PC-3 (cell line): ENCODE measurements at regions of chr3 and their contacts with region 1.

Region 1: GRCh38 chr3:27712136-27713077 is 9.7 kb downstream of the EOMES start:
- DNase-seq: peak; percentile 84
- ATAC-seq: peak; percentile 82
- H3K4me3 ChIP-seq: peak overlapping the region; percentile 78
- H3K27ac ChIP-seq: no peak overlapping the region
- H3K4me1 ChIP-seq: peaks cover 19% of the 10 kb centered on the region
- H3K27me3 ChIP-seq: peaks cover 12% of the 10 kb centered on the region; the same call in 1 of the 2 replicates
- CTCF ChIP-seq: peak; percentile 86

Region 2: DNA sequence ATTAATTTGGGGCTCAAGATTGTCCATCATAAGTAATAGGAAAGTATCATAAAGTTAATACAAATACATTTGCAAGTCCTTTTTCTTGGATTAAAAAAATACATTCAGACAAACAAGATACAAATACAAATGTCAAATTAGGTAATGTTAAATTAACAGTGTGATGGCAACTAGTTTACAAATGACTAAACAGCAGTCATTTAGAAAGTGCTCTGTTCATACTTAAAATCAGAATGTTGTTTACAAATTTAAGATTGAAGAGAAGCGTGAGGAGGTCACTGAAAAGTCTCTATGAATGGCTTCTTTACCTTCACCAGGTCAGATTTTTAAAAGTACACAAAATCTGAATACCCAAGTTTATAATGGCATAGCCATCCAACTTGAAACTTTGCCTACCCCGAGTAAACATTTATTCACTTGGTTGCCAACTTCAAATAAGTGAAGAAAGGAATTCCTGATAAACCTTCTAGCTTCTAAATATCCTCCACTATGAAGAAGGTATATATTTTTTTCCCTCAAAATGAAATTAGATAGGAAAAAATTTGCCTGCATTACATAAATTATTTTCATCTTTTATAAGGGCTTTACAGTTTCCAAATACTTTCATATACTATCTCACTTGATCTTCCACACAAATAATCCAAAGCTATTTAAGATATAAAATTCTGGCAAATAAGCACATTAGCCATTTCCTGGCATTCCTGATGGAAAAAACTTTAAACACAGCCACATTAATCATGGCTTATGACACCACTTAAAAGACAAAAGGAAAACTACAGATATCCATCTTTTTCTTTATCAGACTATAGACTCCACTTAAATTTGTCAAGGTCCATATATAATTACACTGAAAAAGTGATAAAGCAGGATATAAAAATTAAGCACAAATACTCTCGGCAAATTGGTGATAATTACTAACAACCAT is 331.7 kb before region 1 on chr3:
- CTCF ChIA-PET with region 1: interaction called, 16 read pairs
- POLR2A ChIA-PET with region 1: no interaction called
- intact Hi-C with region 1: no loop called
- DNase-seq: no peak
- ATAC-seq: no peak
- H3K4me3 ChIP-seq: no peak overlapping the region
- H3K27ac ChIP-seq: no peak overlapping the region
- H3K4me1 ChIP-seq: no peaks in the 10 kb centered on the region
- H3K27me3 ChIP-seq: no peaks in the 10 kb centered on the region
- CTCF ChIP-seq: no peak

Region 3: DNA sequence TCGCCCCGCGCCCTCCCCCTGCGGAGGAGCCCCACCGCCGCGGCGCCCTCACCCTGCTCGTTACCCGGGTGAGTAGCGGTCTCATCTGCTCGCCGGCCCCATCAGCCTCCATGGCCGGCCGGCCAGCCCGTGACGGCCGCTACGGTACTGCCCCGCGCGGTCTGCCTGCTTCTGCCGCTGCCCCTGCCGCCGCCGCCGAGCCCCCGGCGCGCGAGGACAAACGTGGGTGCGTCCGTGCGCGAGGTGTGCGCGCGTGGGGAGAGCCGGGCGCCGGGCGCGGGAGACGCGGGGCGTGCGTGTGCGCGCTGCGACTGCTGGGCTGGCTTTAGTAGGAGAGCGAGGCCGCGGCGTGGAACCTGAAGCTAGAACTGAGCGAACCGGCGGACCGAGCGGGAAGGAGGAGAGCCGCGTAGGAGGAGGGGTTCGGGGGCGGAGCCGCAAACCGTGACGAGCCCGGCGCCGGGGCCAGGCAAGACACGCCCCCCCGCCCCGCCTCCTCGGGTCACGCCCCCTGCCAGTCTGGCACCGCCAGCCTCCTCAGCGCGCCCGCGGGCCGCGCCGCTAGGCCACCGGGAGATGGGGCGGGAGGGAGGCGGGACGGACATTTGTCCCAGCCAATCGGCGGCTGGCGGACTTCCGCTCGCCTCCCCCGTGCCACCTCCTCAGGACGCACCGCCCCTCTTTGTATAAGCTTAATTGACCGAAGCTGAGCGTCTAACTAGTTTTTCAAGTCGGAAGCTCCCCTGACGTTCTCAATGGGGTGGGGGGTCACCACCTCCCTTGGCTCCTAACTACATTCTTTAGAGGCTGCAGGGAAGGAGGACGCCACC is 228.2 kb before region 1 on chr3 and contains the start of gene SLC4A7:
- CTCF ChIA-PET with region 1: no interaction called
- POLR2A ChIA-PET with region 1: no interaction called
- intact Hi-C with region 1: no loop called
- DNase-seq: peak; percentile 97
- ATAC-seq: peak; percentile 85
- H3K4me3 ChIP-seq: peak within 1 kb of the TSS; percentile 88
- H3K27ac ChIP-seq: peak within 1 kb of the TSS; percentile 59
- H3K4me1 ChIP-seq: peaks cover 33% of the 10 kb centered on the region
- H3K27me3 ChIP-seq: no peaks in the 10 kb centered on the region
- CTCF ChIP-seq: no peak
- total RNA-seq, gene SLC4A7: 56.0 and 59.7 TPM in 2 replicates

Region 4: DNA sequence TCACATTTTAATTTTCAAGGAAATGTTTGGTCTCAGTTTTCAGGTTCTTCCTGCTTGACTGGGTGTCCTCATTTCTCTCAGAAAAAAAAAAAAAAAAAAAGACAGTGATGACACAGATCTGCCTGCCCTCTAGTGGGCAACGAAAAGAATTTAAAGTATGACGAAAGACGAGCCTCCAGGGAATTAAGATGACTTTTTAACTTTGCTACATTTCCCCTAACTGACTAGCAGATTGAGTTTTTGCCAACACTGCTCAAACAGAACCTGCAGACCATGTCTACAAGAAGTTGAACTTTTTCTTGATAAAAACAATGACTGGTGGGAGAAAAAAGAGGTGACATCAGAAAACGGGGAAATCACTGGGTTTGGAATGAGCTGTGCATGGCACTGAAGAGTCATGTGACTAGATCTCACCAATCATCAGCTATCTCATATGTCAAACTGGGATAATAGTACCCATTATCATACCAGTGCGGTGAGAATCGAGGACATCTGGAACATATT is 31.1 kb before region 1 on chr3:
- CTCF ChIA-PET with region 1: interaction called, 15 read pairs
- POLR2A ChIA-PET with region 1: no interaction called
- intact Hi-C with region 1: no loop called
- DNase-seq: peak; percentile 82
- ATAC-seq: peak; percentile 54
- H3K4me3 ChIP-seq: peak overlapping the region; percentile 58
- H3K27ac ChIP-seq: peak overlapping the region; percentile 21
- H3K4me1 ChIP-seq: peaks cover 34% of the 10 kb centered on the region
- H3K27me3 ChIP-seq: no peaks in the 10 kb centered on the region
- CTCF ChIP-seq: peak; percentile 91

Region 5: GRCh38 chr3:27740854-27741253 is 28.4 kb after region 1 on chr3:
- CTCF ChIA-PET with region 1: no interaction called
- POLR2A ChIA-PET with region 1: no interaction called
- intact Hi-C with region 1: no loop called
- DNase-seq: no peak
- ATAC-seq: no peak
- H3K4me3 ChIP-seq: no peak overlapping the region
- H3K27ac ChIP-seq: no peak overlapping the region
- H3K4me1 ChIP-seq: no peaks in the 10 kb centered on the region
- H3K27me3 ChIP-seq: no peaks in the 10 kb centered on the region
- CTCF ChIP-seq: no peak

Region 6: GRCh38 chr3:27779176-27779575 is 66.8 kb after region 1 on chr3:
- CTCF ChIA-PET with region 1: no interaction called
- POLR2A ChIA-PET with region 1: no interaction called
- intact Hi-C with region 1: no loop called
- DNase-seq: no peak
- ATAC-seq: no peak
- H3K4me3 ChIP-seq: no peak overlapping the region
- H3K27ac ChIP-seq: no peak overlapping the region
- H3K4me1 ChIP-seq: no peaks in the 10 kb centered on the region
- H3K27me3 ChIP-seq: peaks cover 23% of the 10 kb centered on the region; the same call in 1 of the 2 replicates
- CTCF ChIP-seq: no peak

Region 7: GRCh38 chr3:27880969-27881892 is 168.8 kb after region 1 on chr3:
- CTCF ChIA-PET with region 1: no interaction called
- POLR2A ChIA-PET with region 1: no interaction called
- intact Hi-C with region 1: loop called (anchors 10 kb)
- DNase-seq: no peak
- ATAC-seq: no peak
- H3K4me3 ChIP-seq: no peak overlapping the region
- H3K27ac ChIP-seq: no peak overlapping the region
- H3K4me1 ChIP-seq: no peaks in the 10 kb centered on the region
- H3K27me3 ChIP-seq: peaks cover 33% of the 10 kb centered on the region
- CTCF ChIP-seq: no peak

Region 8: GRCh38 chr3:28286595-28286994 is 574.2 kb after region 1 on chr3:
- CTCF ChIA-PET with region 1: interaction called, 4 read pairs
- POLR2A ChIA-PET with region 1: no interaction called
- intact Hi-C with region 1: loop called (anchors 1 kb)
- DNase-seq: peak; percentile 68
- ATAC-seq: peak; percentile 98
- H3K4me3 ChIP-seq: no peak overlapping the region
- H3K27ac ChIP-seq: no peak overlapping the region
- H3K4me1 ChIP-seq: no peaks in the 10 kb centered on the region
- H3K27me3 ChIP-seq: no peaks in the 10 kb centered on the region
- CTCF ChIP-seq: peak; percentile 85